Heart left ventricle (tissue), 16 donors: ENCODE measurements at regions of chr3 and their contacts with region 1.

Region 1: GRCh38 chr3:30693470-30694120 is 87.2 kb downstream of the TGFBR2 start:
- DNase-seq: peak in 4 of 5 donors; percentile 39 to 54 (median 48)
- ATAC-seq: peak; percentile 76 to 82 (median 82)
- H3K4me3 ChIP-seq: no peak overlapping the region
- H3K27ac ChIP-seq: peak overlapping the region in 7 of 12 donors; percentile 17 to 81 (median 35)
- H3K4me1 ChIP-seq: peaks cover 2 to 78% (median 57%) of the 10 kb centered on the region in 12 donors
- H3K27me3 ChIP-seq: no peaks in the 10 kb centered on the region
- CTCF ChIP-seq: peak; percentile 65 to 88 (median 82)
- POLR2A ChIP-seq: no peak

Region 2: DNA sequence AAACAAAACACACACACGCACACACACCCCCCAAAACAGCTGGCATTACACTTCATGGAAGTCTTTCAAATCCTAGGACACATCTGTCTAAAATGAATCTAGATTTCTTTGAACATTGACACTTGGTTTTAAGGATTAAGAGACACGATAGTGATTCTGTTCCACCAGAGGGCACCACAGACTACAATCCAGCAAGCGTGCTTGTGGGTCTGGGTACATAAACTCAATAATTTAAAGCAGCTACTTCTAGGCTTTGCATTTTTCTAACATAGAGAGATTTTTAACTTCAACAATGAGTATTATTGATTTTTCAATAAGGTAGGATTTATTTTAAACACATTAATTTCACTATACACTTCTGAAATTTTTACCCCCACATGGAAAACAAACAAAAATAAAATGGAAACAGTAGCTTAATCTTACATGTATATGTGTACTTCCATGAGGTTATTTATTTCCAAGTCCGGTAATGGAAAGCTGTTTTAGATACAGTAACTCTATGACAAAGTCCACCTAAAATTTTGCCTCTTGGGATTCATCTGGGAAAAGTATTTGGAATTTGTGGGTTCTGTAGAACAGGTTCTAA is 651.2 kb before region 1 on chr3:
- intact Hi-C with region 1: loop called in 6 of 10 experiments (anchors 5 to 10 kb)
- DNase-seq: peak in 4 of 5 donors; percentile 35 to 55 (median 50)
- ATAC-seq: peak in 3 of 4 donors; percentile 46 to 78 (median 66)
- H3K4me3 ChIP-seq: no peak overlapping the region
- H3K27ac ChIP-seq: no peak overlapping the region
- H3K4me1 ChIP-seq: peaks cover 0 to 21% (median 1%) of the 10 kb centered on the region in 12 donors
- H3K27me3 ChIP-seq: no peaks in the 10 kb centered on the region
- CTCF ChIP-seq: peak; percentile 67 to 85 (median 78)
- POLR2A ChIP-seq: no peak

Region 3: GRCh38 chr3:30199096-30199759 is 494.4 kb before region 1 on chr3:
- intact Hi-C with region 1: loop called in 8 of 10 experiments (anchors 1 to 10 kb)
- DNase-seq: peak; percentile 70 to 83 (median 73)
- ATAC-seq: peak in 3 of 4 donors; percentile 52 to 76 (median 67)
- H3K4me3 ChIP-seq: no peak overlapping the region
- H3K27ac ChIP-seq: peak overlapping the region in 2 of 12 donors; percentile 3 to 17
- H3K4me1 ChIP-seq: peaks cover 0 to 25% (median 17%) of the 10 kb centered on the region in 12 donors
- H3K27me3 ChIP-seq: no peaks in the 10 kb centered on the region
- CTCF ChIP-seq: peak; percentile 81 to 95 (median 86)
- POLR2A ChIP-seq: no peak

Region 4: DNA sequence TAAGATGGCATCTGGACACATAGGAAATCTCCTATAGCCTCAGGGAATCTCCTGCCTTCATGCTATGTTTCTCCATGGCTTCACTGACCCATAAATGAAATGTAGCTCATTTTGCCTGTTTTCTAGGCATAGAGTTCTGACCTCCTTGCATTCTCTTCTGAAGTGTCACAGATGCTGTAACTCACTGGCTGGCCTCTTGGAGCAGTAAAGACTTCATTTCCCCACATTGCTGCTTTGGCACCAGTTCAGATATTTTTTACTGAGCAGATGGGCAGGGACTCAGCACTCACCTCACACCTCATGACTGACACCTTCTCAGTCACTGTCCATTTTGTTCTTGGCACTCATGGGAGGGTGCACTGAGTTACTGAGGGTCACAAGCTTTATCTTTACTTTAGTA is 373.9 kb before region 1 on chr3:
- intact Hi-C with region 1: loop called in 4 of 10 experiments (anchors 10 kb)
- DNase-seq: peak in 4 of 5 donors; percentile 19 to 41 (median 24)
- ATAC-seq: peak; percentile 18 to 78 (median 44)
- H3K4me3 ChIP-seq: no peak overlapping the region
- H3K27ac ChIP-seq: no peak overlapping the region
- H3K4me1 ChIP-seq: peaks cover 0 to 11% (median 0%) of the 10 kb centered on the region in 12 donors
- H3K27me3 ChIP-seq: no peaks in the 10 kb centered on the region
- CTCF ChIP-seq: peak; percentile 18 to 56 (median 36)
- POLR2A ChIP-seq: no peak

Region 5: GRCh38 chr3:30426293-30426993 is 267.2 kb before region 1 on chr3:
- intact Hi-C with region 1: no loop called
- DNase-seq: peak; percentile 64 to 89 (median 81)
- ATAC-seq: peak; percentile 100
- H3K4me3 ChIP-seq: no peak overlapping the region
- H3K27ac ChIP-seq: peak overlapping the region; percentile 53 to 86 (median 68)
- H3K4me1 ChIP-seq: peaks cover 0 to 24% (median 12%) of the 10 kb centered on the region in 12 donors
- H3K27me3 ChIP-seq: no peaks in the 10 kb centered on the region
- CTCF ChIP-seq: no peak
- POLR2A ChIP-seq: no peak

Region 6: DNA sequence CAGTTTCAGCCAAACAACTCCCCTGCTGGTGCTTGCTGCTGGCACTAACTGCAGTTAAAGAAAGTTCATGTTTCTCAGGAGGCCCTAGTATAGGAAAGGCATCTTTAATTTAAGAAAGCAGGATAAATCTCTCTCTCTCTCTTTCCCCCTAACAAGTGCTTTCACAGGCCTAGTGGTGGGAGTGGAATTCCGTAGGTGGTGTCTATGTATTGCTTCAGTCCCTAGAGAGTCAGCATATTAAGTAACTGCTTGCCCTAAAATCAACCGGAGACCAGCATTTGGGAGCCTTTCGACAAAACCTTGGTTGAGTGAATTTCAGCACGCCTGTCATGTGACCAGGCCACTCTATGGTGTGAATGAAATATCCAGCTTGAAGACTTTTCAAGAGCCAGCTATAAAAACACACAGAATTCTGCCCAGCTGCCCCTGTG is 256.4 kb before region 1 on chr3:
- intact Hi-C with region 1: loop called in 5 of 10 experiments (anchors 5 to 10 kb)
- DNase-seq: peak in 4 of 5 donors; percentile 33 to 70 (median 52)
- ATAC-seq: peak in 3 of 4 donors; percentile 48 to 76 (median 74)
- H3K4me3 ChIP-seq: no peak overlapping the region
- H3K27ac ChIP-seq: peak overlapping the region; percentile 19 to 83 (median 55)
- H3K4me1 ChIP-seq: peaks cover 0 to 47% (median 27%) of the 10 kb centered on the region in 12 donors
- H3K27me3 ChIP-seq: no peaks in the 10 kb centered on the region
- CTCF ChIP-seq: peak in 3 of 12 donors; percentile 1 to 24 (median 14)
- POLR2A ChIP-seq: no peak

Region 7: GRCh38 chr3:30524357-30525040 is 169.1 kb before region 1 on chr3:
- intact Hi-C with region 1: loop called in 8 of 10 experiments (anchors 2 to 10 kb)
- DNase-seq: no peak
- ATAC-seq: no peak
- H3K4me3 ChIP-seq: no peak overlapping the region
- H3K27ac ChIP-seq: no peak overlapping the region
- H3K4me1 ChIP-seq: peaks cover 0 to 56% (median 11%) of the 10 kb centered on the region in 12 donors
- H3K27me3 ChIP-seq: no peaks in the 10 kb centered on the region
- CTCF ChIP-seq: no peak
- POLR2A ChIP-seq: no peak

Region 8: DNA sequence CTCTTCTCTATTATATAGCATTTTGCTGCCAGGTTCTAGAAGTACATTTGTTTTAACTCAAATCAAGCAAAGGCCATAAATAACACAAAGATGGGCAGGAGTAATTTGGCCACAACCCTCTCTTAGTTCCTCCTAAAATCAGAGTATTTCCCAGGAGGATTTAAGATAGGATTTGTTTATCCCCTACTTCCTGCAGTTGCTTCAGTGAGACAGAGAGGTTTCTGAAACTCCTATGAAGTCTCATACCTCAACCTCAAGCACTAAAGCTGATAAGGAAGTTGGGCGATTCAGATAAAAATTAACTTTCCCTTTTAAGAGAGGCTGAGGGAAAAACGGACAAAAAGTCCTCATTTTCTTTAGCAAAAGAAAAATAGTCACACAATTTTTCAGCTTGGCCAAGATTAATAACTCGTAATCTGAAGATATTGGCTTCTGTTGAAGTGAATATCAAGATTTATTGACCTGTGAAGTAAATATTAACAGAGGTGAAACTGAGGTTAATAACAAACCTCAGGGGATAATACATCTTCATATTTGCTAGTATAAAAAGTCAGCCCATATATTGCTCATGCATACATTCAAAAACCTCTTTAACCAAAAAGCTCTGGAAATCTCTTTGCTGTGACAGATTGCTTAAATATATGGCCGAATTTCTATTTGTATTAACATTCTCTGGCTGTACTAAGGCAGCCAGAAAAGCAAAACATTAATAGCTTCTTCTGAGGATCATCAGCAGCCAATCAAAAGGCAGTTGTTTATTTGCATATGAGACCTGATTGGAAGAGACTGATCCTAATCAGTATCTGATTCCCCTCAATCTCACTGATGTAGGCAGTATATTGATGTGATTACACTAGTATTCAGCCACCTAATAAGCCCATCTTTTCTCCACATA is 291.5 kb after region 1 on chr3:
- intact Hi-C with region 1: no loop called
- DNase-seq: no peak
- ATAC-seq: no peak
- H3K4me3 ChIP-seq: peak overlapping the region in 1 of 12 donors; percentile 15
- H3K27ac ChIP-seq: no peak overlapping the region
- H3K4me1 ChIP-seq: peaks cover 0 to 7% (median 0%) of the 10 kb centered on the region in 12 donors
- H3K27me3 ChIP-seq: no peaks in the 10 kb centered on the region
- CTCF ChIP-seq: no peak
- POLR2A ChIP-seq: no peak